Activated CD8-positive, alpha-beta memory T cell treated with anti-CD3 and anti-CD28 coated beads, Interleukin-2, amount 10 ng/mL, durations not matched to agents 7 days and 5 days (primary cell): ENCODE measurements at regions of chr18 and their contacts with region 1.

Region 1: DNA sequence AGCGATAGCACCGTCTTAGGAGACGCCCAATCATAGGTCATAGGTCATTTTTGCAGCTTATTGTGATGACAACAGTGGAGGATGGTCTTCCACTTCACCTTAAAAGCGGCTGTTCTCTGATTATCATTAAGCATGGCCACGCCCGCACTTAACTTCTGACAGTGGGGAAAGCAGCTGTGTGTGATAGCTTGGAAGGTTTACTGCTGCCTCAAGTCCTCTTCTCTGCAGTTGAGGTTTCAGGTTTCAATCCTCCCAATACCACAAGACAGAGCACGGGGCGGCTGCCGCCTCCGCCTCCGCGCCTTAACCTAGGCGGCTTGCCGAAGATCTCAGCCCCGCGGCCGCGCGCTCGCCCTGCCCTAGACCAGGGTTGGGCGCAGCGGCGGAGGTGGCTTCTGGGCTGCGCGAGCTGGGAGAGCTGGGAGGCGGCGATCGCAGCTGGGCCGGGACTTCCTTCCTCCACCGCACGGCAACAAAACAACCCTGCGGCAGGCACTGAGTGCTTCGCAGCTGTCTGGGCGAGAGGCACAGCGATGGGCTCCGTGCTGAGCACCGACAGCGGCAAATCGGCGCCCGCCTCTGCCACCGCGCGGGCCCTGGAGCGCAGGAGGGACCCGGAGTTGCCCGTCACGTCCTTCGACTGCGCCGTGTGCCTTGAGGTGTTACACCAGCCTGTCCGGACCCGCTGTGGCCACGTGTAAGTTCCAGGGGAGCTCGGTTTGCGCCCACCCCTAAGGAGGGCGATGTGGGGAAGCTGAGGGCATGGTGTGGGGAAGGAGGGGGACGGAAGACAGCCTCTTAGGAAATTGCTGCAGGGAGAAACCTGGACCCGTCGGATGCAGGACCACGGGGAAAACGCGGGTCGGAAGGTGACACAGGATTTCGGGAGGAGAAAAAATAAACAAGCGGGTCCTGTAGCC is at the start of gene RNF125:
- DNase-seq: peak; percentile 94
- ATAC-seq: peak; percentile 81
- H3K4me3 Mint-ChIP-seq: peak within 1 kb of the TSS; percentile 96
- H3K27ac Mint-ChIP-seq: peak within 1 kb of the TSS; percentile 98
- H3K4me1 Mint-ChIP-seq: peaks cover 38% of the 10 kb centered on the region
- H3K27me3 Mint-ChIP-seq: peaks cover 2% of the 10 kb centered on the region
- total RNA-seq, gene RNF125: 26.1 to 31.9 TPM

Region 2: GRCh38 chr18:31942999-31943865 is 75.4 kb before region 1 on chr18 and contains the start of gene TRAPPC8:
- CTCF ChIA-PET with region 1: interaction called, 21 read pairs
- DNase-seq: peak; percentile 96
- ATAC-seq: peak; percentile 90
- H3K4me3 Mint-ChIP-seq: peak within 1 kb of the TSS; percentile 100
- H3K27ac Mint-ChIP-seq: peak within 1 kb of the TSS; percentile 100
- H3K4me1 Mint-ChIP-seq: peaks cover 41% of the 10 kb centered on the region
- H3K27me3 Mint-ChIP-seq: no peaks in the 10 kb centered on the region
- total RNA-seq, gene TRAPPC8: 33.0 to 41.9 TPM

Region 3: GRCh38 chr18:32040936-32041335 is 22.3 kb after region 1 on chr18:
- CTCF ChIA-PET with region 1: interaction called, 25 read pairs
- DNase-seq: peak; percentile 88
- ATAC-seq: peak; percentile 93
- H3K4me3 Mint-ChIP-seq: peak overlapping the region; percentile 63
- H3K27ac Mint-ChIP-seq: peak overlapping the region; percentile 95
- H3K4me1 Mint-ChIP-seq: peaks cover 62% of the 10 kb centered on the region
- H3K27me3 Mint-ChIP-seq: no peaks in the 10 kb centered on the region

Region 4: GRCh38 chr18:32048507-32049091 is 30.0 kb after region 1 on chr18:
- CTCF ChIA-PET with region 1: interaction called, 16 read pairs
- DNase-seq: peak; percentile 47
- ATAC-seq: peak; percentile 43
- H3K4me3 Mint-ChIP-seq: peak overlapping the region; percentile 18
- H3K27ac Mint-ChIP-seq: peak overlapping the region; percentile 87
- H3K4me1 Mint-ChIP-seq: peaks cover 54% of the 10 kb centered on the region
- H3K27me3 Mint-ChIP-seq: no peaks in the 10 kb centered on the region

Region 5: DNA sequence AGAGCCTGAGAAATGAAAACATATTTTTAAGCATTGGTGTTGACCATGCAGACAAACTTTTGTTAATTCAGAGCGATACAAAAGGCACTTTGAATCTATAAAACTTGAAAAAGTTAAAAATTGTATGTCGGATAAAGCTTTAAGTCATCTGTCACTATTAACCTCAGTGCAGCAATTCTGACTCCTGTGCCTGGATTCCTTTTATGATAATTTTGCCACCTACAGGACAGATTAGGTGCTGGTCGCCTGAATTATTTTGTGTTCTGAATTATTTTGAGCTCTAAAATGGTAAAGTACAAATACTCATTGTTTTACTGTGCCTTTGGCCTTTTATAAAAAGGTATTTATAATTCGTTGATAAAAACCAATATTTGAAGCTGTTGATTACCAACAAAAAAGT is 53.7 kb after region 1 on chr18:
- CTCF ChIA-PET with region 1: interaction called, 42 read pairs
- DNase-seq: no peak
- ATAC-seq: peak; percentile 65
- H3K4me3 Mint-ChIP-seq: no peak overlapping the region
- H3K27ac Mint-ChIP-seq: no peak overlapping the region
- H3K4me1 Mint-ChIP-seq: peaks cover 26% of the 10 kb centered on the region
- H3K27me3 Mint-ChIP-seq: no peaks in the 10 kb centered on the region

Region 6: GRCh38 chr18:32086861-32087260 is 68.3 kb after region 1 on chr18:
- CTCF ChIA-PET with region 1: interaction called, 37 read pairs
- DNase-seq: no peak
- ATAC-seq: no peak
- H3K4me3 Mint-ChIP-seq: no peak overlapping the region
- H3K27ac Mint-ChIP-seq: no peak overlapping the region
- H3K4me1 Mint-ChIP-seq: peaks cover 39% of the 10 kb centered on the region
- H3K27me3 Mint-ChIP-seq: peaks cover 3% of the 10 kb centered on the region

Region 7: DNA sequence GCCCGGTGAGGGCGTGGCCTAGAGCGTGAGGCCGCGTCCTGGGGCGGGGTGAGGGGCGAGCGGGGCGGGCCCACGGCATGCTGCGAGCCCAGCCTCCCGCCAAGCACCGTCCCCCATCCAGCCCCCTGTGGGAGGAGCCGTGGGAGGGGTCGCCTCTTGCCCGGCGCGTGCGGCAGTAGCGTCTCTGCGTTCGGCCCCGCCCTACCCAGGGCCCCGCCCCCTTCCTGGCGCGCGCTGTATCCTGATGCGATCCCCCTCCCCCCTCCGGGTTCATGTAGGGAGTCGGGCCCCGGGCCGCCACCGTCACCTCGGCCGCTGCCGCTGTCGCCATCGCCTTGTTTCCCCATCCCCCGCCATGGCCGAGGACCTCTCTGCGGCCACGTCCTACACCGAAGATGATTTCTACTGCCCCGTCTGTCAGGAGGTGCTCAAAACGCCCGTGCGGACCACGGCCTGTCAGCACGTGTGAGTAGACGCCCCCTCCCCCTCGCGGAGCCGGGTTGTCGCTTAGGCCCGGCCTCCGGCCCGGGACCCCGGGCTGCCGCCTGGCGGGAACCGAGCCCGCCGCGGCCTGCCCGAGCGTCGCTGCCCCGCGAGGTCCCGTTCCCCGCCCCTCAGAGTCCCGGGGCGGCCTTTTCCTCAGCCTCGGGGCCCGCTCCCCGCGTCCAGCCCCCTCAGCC is 74.0 kb after region 1 on chr18:
- CTCF ChIA-PET with region 1: interaction called, 37 read pairs
- DNase-seq: peak; percentile 99
- ATAC-seq: peak; percentile 92
- H3K4me3 Mint-ChIP-seq: peak overlapping the region; percentile 97
- H3K27ac Mint-ChIP-seq: peak overlapping the region; percentile 96
- H3K4me1 Mint-ChIP-seq: peaks cover 40% of the 10 kb centered on the region
- H3K27me3 Mint-ChIP-seq: no peaks in the 10 kb centered on the region